A549 (cell line): ENCODE measurements at regions of chr20 and their contacts with region 1.

Region 1: GRCh38 chr20:22339091-22339881 is 245.1 kb downstream of the FOXA2 start:
- DNase-seq: peak; percentile 60 to 91
- ATAC-seq: peak; percentile 71 to 86; a peak in 5 of 6 replicates
- H3K4me3 ChIP-seq: no peak overlapping the region
- H3K27ac ChIP-seq: peak overlapping the region; percentile 63 to 65; a peak in 4 of 6 replicates
- H3K4me1 ChIP-seq: peaks cover 25% of the 10 kb centered on the region
- CTCF ChIP-seq: peak; percentile 98
- EP300 ChIP-seq: no peak
- POLR2A ChIP-seq: no peak
- RAD21 ChIP-seq: peak; percentile 100

Region 2: GRCh38 chr20:22379472-22379871 is 40.2 kb after region 1 on chr20:
- CTCF ChIA-PET with region 1: interaction called, 63 read pairs
- POLR2A ChIA-PET with region 1: no interaction called
- DNase-seq: peak in 1 of 2 experiments; percentile 71
- ATAC-seq: peak; percentile 49 to 70; a peak in 5 of 6 replicates
- H3K4me3 ChIP-seq: no peak overlapping the region
- H3K27ac ChIP-seq: peak overlapping the region; percentile 63 to 72
- H3K4me1 ChIP-seq: peaks cover 61% of the 10 kb centered on the region
- CTCF ChIP-seq: no peak
- EP300 ChIP-seq: no peak; a peak in 1 of 5 replicates
- POLR2A ChIP-seq: no peak
- RAD21 ChIP-seq: peak in 1 of 2 experiments; percentile 19; a peak in 1 of 5 replicates

Region 3: GRCh38 chr20:22403632-22404361 is 64.5 kb after region 1 on chr20:
- CTCF ChIA-PET with region 1: interaction called, 12 read pairs
- POLR2A ChIA-PET with region 1: no interaction called
- DNase-seq: peak in 1 of 2 experiments; percentile 92
- ATAC-seq: peak; percentile 62 to 78
- H3K4me3 ChIP-seq: peak overlapping the region; percentile 25
- H3K27ac ChIP-seq: peak overlapping the region; percentile 88 to 98
- H3K4me1 ChIP-seq: peaks cover 62% of the 10 kb centered on the region
- CTCF ChIP-seq: no peak; the same call in 2 of the 3 replicates
- EP300 ChIP-seq: peak; percentile 62 to 74; a peak in 2 of 5 replicates
- POLR2A ChIP-seq: no peak
- RAD21 ChIP-seq: peak in 1 of 2 experiments; percentile 9; a peak in 2 of 5 replicates

Region 4: GRCh38 chr20:22480336-22480735 is 141.1 kb after region 1 on chr20:
- CTCF ChIA-PET with region 1: interaction called, 11 read pairs
- POLR2A ChIA-PET with region 1: no interaction called
- DNase-seq: no peak
- ATAC-seq: no peak
- H3K4me3 ChIP-seq: no peak overlapping the region
- H3K27ac ChIP-seq: 0 out of 6 replicates have a peak overlapping the region, but pooled peaks of 1 of the 2 experiments have one; percentile 6
- H3K4me1 ChIP-seq: no peaks in the 10 kb centered on the region
- CTCF ChIP-seq: no peak
- EP300 ChIP-seq: no peak
- POLR2A ChIP-seq: no peak
- RAD21 ChIP-seq: no peak

Region 5: GRCh38 chr20:22575087-22575721 is 235.9 kb after region 1 on chr20:
- CTCF ChIA-PET with region 1: interaction called, 14 read pairs
- POLR2A ChIA-PET with region 1: no interaction called
- DNase-seq: peak in 1 of 2 experiments; percentile 38
- ATAC-seq: peak in 1 of 2 experiments; percentile 25; a peak in 3 of 6 replicates
- H3K4me3 ChIP-seq: no peak overlapping the region
- H3K27ac ChIP-seq: peak overlapping the region; percentile 7 to 72; a peak in 4 of 6 replicates
- H3K4me1 ChIP-seq: peaks cover 39% of the 10 kb centered on the region
- CTCF ChIP-seq: no peak
- EP300 ChIP-seq: peak in 1 of 2 experiments; percentile 47; a peak in 1 of 5 replicates
- POLR2A ChIP-seq: no peak
- RAD21 ChIP-seq: no peak

Region 6: GRCh38 chr20:22675341-22675740 is 336.1 kb after region 1 on chr20:
- CTCF ChIA-PET with region 1: interaction called, 311 read pairs
- POLR2A ChIA-PET with region 1: no interaction called
- DNase-seq: no peak
- ATAC-seq: no peak
- H3K4me3 ChIP-seq: no peak overlapping the region
- H3K27ac ChIP-seq: no peak overlapping the region
- H3K4me1 ChIP-seq: peaks cover 5% of the 10 kb centered on the region; the same call in 2 of the 3 replicates
- CTCF ChIP-seq: no peak
- EP300 ChIP-seq: no peak
- POLR2A ChIP-seq: no peak
- RAD21 ChIP-seq: no peak